Cardiac septum (tissue), 1 donor: ENCODE measurements at regions of chr5 and their contacts with region 1.

Region 1: GRCh38 chr5:51382763-51383490 is at the start of gene ISL1:
- DNase-seq: no peak
- total RNA-seq, gene ISL1: not detected

Region 2: DNA sequence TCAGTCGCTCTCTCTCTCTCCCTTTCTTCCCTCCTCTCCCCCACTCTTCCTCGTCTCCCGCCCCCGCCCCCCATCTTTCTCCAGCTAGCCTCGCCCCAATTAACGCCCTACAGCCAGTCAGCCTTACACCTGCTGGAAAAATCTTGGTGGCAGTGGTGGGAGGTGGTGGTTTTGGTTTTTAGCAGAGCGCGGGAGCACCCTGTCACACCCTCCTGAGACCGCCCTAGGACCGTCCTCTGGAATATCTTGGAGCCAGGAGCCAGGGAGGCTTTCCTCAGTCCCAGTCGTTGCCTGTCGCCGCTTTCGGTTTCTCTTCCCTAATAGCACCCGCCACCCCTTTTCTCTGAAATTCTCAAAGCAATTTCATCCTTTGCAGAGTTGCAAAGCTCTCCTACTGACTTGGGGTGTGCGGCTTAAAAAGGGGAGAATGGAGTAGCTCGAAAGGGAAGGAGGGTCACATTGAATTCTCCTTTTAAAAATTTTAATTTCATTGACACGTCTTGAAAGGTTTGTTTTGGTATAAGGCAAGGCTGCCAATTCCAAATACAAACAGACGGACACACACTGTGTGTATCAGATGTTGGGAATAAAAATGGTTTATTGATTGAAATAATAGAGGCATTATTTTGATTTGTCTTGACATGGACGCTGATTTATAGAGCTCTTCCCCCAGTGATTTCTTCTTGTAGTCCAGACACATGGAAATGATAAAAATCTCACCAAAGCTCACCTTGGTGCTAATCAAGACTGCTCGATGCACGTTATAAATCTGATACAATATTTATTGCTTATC is 415.2 kb before region 1 on chr5:
- intact Hi-C with region 1: loop called (anchors 5 kb)
- DNase-seq: no peak